Activated B cell treated with CpG ODN at 0.5 μM for 24 hours (primary cell): ENCODE measurements at regions of chr2 and their contacts with region 1.

Region 1: GRCh38 chr2:12032398-12032797 is 286.0 kb downstream of the LPIN1 start:
- DNase-seq: no peak
- ATAC-seq: peak; percentile 86
- H3K4me3 Mint-ChIP-seq: peak overlapping the region; percentile 62
- H3K27ac Mint-ChIP-seq: peak overlapping the region; percentile 74
- H3K4me1 Mint-ChIP-seq: peaks cover 64% of the 10 kb centered on the region
- H3K27me3 Mint-ChIP-seq: no peaks in the 10 kb centered on the region
- CTCF ChIP-seq: no peak

Region 2: GRCh38 chr2:11753886-11754699 is 278.3 kb before region 1 on chr2:
- CTCF ChIA-PET with region 1: no interaction called
- POLR2A ChIA-PET with region 1: no interaction called
- intact Hi-C with region 1: loop called (anchors 5 kb)
- DNase-seq: peak; percentile 43
- ATAC-seq: peak; percentile 54
- H3K4me3 Mint-ChIP-seq: peak overlapping the region; percentile 82
- H3K27ac Mint-ChIP-seq: peak overlapping the region; percentile 96
- H3K4me1 Mint-ChIP-seq: peaks cover 90% of the 10 kb centered on the region
- H3K27me3 Mint-ChIP-seq: no peaks in the 10 kb centered on the region
- CTCF ChIP-seq: no peak

Region 3: GRCh38 chr2:11863513-11864328 is 168.7 kb before region 1 on chr2:
- CTCF ChIA-PET with region 1: interaction called, 5 read pairs
- POLR2A ChIA-PET with region 1: interaction called, 4 read pairs
- intact Hi-C with region 1: loop called (anchors 1 kb)
- DNase-seq: peak; percentile 41
- ATAC-seq: peak; percentile 65
- H3K4me3 Mint-ChIP-seq: peak overlapping the region; percentile 47
- H3K27ac Mint-ChIP-seq: peak overlapping the region; percentile 41
- H3K4me1 Mint-ChIP-seq: peaks cover 92% of the 10 kb centered on the region
- H3K27me3 Mint-ChIP-seq: no peaks in the 10 kb centered on the region
- CTCF ChIP-seq: peak; percentile 85

Region 4: GRCh38 chr2:12044857-12045256 is 12.5 kb after region 1 on chr2:
- CTCF ChIA-PET with region 1: interaction called, 21 read pairs
- POLR2A ChIA-PET with region 1: interaction called, 18 read pairs
- intact Hi-C with region 1: loop called (anchors 1 kb)
- DNase-seq: no peak
- ATAC-seq: peak; percentile 89
- H3K4me3 Mint-ChIP-seq: peak overlapping the region; percentile 44
- H3K27ac Mint-ChIP-seq: peak overlapping the region; percentile 68
- H3K4me1 Mint-ChIP-seq: peaks cover 97% of the 10 kb centered on the region
- H3K27me3 Mint-ChIP-seq: no peaks in the 10 kb centered on the region
- CTCF ChIP-seq: no peak

Region 5: GRCh38 chr2:12071318-12071717 is 38.9 kb after region 1 on chr2:
- CTCF ChIA-PET with region 1: no interaction called
- POLR2A ChIA-PET with region 1: no interaction called
- intact Hi-C with region 1: loop called (anchors 5 kb)
- DNase-seq: no peak
- ATAC-seq: peak; percentile 83
- H3K4me3 Mint-ChIP-seq: peak overlapping the region; percentile 11
- H3K27ac Mint-ChIP-seq: peak overlapping the region; percentile 61
- H3K4me1 Mint-ChIP-seq: peaks cover 63% of the 10 kb centered on the region
- H3K27me3 Mint-ChIP-seq: no peaks in the 10 kb centered on the region
- CTCF ChIP-seq: no peak

Region 6: DNA sequence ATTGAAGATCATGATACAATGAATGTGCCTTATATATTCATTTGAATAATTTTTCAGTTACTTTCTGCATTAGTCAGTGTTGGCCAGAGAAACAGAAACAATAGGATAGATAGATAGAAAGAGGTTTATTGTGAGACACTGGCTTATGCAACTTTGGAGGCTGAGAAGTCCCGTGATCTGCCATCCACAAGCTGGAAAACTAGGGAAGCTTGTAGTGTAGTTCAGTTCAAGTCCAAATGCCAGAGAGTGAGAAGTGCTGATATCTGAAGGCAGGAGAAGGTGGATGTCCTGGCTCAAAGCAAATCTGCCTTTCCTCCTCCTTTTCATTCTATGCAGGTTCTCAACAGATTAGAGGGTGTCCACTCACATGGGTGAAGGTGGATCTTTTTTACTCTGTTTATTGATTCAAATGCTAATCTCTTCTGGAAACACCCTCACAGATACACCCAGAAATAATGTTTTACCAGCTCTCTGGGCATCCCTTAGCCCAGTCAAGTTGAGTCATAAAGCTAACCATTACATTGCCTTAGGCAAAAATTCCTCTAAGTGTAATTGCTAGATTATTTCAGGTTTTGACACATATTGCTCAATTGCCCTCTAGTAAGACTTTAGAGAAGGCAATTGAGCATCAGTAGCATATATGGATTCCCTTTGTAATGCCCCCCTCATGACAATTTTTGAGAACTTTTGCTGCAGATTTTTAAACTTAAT is 55.4 kb after region 1 on chr2:
- CTCF ChIA-PET with region 1: no interaction called
- POLR2A ChIA-PET with region 1: no interaction called
- intact Hi-C with region 1: no loop called
- DNase-seq: no peak
- ATAC-seq: no peak
- H3K4me3 Mint-ChIP-seq: no peak overlapping the region
- H3K27ac Mint-ChIP-seq: no peak overlapping the region
- H3K4me1 Mint-ChIP-seq: peaks cover 12% of the 10 kb centered on the region
- H3K27me3 Mint-ChIP-seq: no peaks in the 10 kb centered on the region
- CTCF ChIP-seq: no peak

Region 7: GRCh38 chr2:12534646-12535263 is 502.4 kb after region 1 on chr2:
- CTCF ChIA-PET with region 1: no interaction called
- POLR2A ChIA-PET with region 1: no interaction called
- intact Hi-C with region 1: no loop called
- DNase-seq: no peak
- ATAC-seq: no peak
- H3K4me3 Mint-ChIP-seq: no peak overlapping the region
- H3K27ac Mint-ChIP-seq: no peak overlapping the region
- H3K4me1 Mint-ChIP-seq: peaks cover 2% of the 10 kb centered on the region
- H3K27me3 Mint-ChIP-seq: peaks cover 5% of the 10 kb centered on the region
- CTCF ChIP-seq: no peak

Region 8: DNA sequence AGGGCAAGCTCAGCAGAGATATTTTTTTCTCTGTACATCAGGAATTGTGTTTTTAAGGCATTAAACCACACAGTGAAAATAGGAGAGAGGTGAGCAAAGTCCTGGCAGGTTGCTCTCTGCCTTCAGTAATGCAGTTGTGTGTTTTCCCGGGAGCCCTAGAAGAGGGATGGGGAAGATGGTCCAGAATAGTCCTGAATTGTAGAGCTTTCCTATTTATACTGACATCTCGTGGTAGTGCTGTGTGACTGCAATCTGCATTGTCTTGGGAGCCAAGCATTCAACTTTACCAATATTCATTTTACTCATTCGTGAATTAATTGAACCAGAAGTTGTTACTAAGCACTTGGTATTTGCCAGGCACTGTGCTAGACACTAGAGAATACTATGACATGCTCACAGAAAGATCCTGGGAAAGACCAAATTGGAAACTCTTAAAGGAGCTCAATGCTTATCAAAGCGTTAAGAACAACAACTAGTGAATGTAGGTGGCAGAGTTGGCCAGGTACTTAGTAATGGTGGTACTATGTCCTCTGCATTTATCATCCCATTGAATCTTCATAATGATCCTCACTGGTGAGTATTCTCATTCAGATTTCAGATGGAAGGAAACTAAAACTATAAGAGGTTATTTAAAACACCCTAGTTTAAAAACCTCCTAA is 898.9 kb after region 1 on chr2:
- CTCF ChIA-PET with region 1: interaction called, 3 read pairs
- POLR2A ChIA-PET with region 1: no interaction called
- intact Hi-C with region 1: loop called (anchors 5 kb)
- DNase-seq: no peak
- ATAC-seq: peak; percentile 49
- H3K4me3 Mint-ChIP-seq: no peak overlapping the region
- H3K27ac Mint-ChIP-seq: no peak overlapping the region
- H3K4me1 Mint-ChIP-seq: peaks cover 15% of the 10 kb centered on the region
- H3K27me3 Mint-ChIP-seq: no peaks in the 10 kb centered on the region
- CTCF ChIP-seq: no peak